Endothelial cell of umbilical vein (primary cell): ENCODE measurements at regions of chr20 and their contacts with region 1.

Region 1: GRCh38 chr20:36050436-36051317 is 82.3 kb downstream of the CNBD2 start:
- DNase-seq: peak; percentile 74
- H3K4me3 ChIP-seq: peak overlapping the region; percentile 63 to 85 (median 66)
- H3K27ac ChIP-seq: peak overlapping the region; percentile 87
- H3K4me1 ChIP-seq: peaks cover 8% of the 10 kb centered on the region
- H3K27me3 ChIP-seq: no peaks in the 10 kb centered on the region
- CTCF ChIP-seq: no peak
- POLR2A ChIP-seq: peak; percentile 98

Region 2: DNA sequence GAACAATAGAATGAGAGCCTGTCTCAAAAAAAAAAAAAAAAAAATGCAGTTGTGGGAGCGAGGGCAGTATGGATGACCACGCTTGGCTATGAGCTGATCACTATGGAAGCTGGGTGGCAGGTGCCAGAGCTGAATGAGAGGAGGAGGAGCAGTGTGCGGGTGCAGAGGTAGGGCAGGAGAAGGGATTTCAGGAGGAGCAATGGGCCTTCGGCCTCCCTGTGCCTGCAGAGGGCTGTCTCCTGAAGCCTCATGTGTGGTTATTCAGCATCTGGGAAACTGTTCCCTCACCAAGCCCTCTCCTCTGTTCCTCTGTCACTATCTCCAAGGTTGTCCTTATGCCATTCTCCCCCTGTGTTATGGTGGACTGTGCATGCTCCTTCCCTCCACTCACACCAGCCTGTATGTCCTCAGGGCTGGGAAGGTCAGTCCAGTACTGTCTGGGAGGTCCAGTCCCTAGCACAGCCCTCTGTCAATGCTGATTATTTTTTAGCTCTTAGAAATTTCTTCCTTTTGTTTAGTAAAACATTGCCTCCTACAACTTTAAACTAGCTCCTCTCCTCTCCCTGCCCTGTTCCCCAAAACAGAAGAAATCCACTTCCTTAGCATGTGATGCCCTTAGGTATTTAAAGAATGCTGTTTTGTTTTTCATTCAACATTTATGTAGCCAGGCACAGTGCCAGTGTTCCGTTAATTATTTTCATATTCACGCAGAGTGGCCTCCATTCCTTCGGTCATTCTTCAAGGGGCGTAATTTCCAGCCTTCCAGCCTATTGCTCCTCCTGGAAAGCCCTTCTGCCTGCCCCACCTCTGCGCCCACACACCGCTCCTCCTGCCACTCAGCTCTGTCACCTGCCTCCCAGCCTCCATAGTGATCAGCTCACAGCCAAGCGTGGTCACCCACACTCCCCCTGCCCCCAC is 33.4 kb before region 1 on chr20:
- CTCF ChIA-PET with region 1: no interaction called
- POLR2A ChIA-PET with region 1: no interaction called
- dilution Hi-C with region 1: no loop called
- intact Hi-C with region 1: loop called (anchors 2 kb)
- DNase-seq: peak; percentile 94
- H3K4me3 ChIP-seq: no peak overlapping the region
- H3K27ac ChIP-seq: peak overlapping the region; percentile 44
- H3K4me1 ChIP-seq: peaks cover 14% of the 10 kb centered on the region
- H3K27me3 ChIP-seq: no peaks in the 10 kb centered on the region
- CTCF ChIP-seq: no peak
- POLR2A ChIP-seq: no peak

Region 3: DNA sequence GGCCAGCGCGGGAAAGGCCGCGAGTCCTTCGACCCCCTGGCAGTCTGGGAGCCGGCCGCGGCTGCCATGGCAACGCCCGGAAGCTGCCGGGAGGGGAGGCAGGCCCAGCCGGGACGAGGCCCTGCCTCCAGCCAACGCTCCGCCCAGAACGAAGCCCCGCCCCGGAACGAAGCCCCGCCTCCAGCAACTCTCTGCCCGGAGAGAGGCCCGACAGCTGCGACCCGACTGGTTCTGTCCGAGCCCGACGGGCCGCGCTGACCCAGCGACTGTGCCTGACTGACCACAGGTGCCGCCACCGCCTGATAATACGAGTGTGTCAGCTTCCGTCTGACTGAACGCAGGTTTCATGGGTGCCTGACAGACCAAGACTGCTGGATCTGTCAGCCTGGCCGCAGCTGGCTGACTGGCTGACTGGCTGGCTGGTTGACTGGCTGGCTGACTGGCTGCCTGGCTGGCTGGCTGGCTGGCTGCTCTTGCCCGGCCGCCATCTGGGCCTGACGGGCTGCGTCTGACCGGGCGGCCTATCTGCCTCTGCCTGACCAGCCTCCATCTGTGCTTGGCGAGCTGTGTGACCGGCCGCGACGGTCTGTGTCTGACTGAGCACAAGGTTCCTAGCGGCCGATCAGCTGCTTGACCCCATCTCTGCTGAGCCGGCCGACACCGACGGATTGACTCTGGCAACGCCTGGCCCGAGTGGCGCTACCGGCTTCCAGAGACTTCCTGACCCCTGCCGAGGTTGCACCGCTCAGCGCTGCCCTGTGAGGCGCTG is 14.2 kb after region 1 on chr20:
- CTCF ChIA-PET with region 1: interaction called, 3 read pairs
- POLR2A ChIA-PET with region 1: interaction called, 3 read pairs
- dilution Hi-C with region 1: no loop called
- intact Hi-C with region 1: loop called (anchors 1 kb)
- DNase-seq: peak; percentile 93
- H3K4me3 ChIP-seq: peak overlapping the region in 1 of 3 experiments; percentile 44
- H3K27ac ChIP-seq: peak overlapping the region; percentile 16
- H3K4me1 ChIP-seq: no peaks in the 10 kb centered on the region
- H3K27me3 ChIP-seq: peaks cover 0 to 2% of the 10 kb centered on the region in 2 experiments
- CTCF ChIP-seq: peak in 1 of 2 donors; percentile 3
- POLR2A ChIP-seq: peak; percentile 74

Region 4: DNA sequence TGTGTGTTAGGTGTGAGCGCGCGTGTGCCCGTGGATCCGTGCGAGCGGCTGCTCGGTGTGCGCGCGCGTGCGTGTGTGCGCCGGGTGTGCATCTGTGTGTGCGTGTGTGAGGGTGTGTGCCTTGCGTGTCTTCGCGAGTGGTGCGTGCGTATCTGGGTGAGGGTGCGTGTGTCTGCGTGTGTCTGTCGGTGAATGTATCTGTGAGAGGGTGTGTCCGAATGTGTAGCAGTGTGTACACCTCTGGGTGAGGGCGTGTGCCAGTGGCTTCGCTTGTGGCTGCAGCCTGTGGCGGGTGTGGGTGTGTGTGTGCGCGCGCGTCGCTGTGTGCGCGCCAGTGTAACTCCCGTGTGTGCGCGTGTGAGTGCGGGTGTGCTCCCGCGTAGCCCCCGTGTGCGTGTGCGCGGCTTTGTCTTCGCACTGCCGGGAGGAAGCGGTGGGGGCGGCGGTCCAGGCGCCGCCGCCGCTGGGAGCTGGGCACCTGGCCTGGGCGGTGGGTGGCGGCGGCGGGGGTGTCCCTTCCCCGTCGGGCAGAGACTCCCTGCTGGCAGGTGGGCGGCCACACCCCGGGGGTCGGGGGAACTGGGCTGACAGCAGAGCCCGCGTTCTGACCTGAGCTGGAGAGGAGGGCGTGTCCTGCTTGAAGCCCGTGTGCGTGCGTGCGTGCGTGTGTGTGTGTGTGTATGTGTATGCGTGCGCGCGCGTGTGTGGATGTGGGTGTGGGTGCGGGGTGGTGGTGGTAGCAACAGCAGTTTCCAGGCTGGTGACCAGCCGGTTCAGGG is 42.5 kb after region 1 on chr20:
- CTCF ChIA-PET with region 1: no interaction called
- POLR2A ChIA-PET with region 1: no interaction called
- dilution Hi-C with region 1: no loop called
- intact Hi-C with region 1: loop called (anchors 5 kb)
- DNase-seq: peak; percentile 24
- H3K4me3 ChIP-seq: peak overlapping the region in 2 of 3 experiments; percentile 1 to 47
- H3K27ac ChIP-seq: no peak overlapping the region
- H3K4me1 ChIP-seq: peaks cover 25% of the 10 kb centered on the region
- H3K27me3 ChIP-seq: peaks cover 6 to 12% of the 10 kb centered on the region in 2 experiments
- CTCF ChIP-seq: no peak
- POLR2A ChIP-seq: peak; percentile 42

Region 5: DNA sequence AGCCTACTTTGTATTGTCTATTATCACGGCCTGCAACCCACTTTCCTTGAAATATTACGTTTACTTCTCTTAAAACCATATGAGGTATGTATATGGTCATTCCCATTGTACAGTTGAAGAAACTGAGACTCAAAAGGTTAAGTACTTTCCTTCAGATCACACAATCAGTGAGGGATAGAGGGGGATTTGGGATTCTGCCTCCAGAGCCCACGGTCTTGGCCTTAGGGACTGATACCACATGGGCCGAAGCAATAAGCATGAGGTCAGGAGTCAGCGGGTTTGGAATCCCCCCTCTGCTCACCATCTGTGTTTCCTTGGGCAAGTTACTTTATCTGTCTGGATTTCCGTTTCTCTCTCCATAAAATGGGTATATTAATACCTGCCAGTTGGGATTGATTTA is 84.5 kb after region 1 on chr20:
- CTCF ChIA-PET with region 1: interaction called, 13 read pairs
- POLR2A ChIA-PET with region 1: no interaction called
- dilution Hi-C with region 1: no loop called
- intact Hi-C with region 1: loop called (anchors 5 kb)
- DNase-seq: no peak
- H3K4me3 ChIP-seq: no peak overlapping the region
- H3K27ac ChIP-seq: no peak overlapping the region
- H3K4me1 ChIP-seq: no peaks in the 10 kb centered on the region
- H3K27me3 ChIP-seq: no peaks in the 10 kb centered on the region
- CTCF ChIP-seq: no peak
- POLR2A ChIP-seq: no peak

Region 6: DNA sequence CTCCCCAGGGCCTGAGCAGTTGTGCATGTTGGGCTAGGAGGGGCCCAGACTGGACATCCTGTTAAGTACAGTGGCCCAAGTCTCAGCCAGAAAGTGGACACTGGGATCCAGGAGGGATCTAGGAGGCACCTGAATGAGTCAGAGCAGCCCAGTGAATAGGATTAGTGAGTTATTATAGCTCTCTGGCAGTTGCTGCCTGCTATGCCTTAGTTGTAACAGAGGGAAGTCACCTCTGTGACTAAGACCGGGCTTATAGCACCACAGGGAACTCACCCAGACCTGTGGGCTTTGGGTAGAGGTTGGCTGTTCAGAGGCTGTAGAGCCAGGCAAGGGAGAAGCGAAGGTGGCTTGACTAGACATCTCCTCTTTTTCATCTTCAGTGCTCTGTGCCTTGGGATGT is 146.6 kb after region 1 on chr20:
- CTCF ChIA-PET with region 1: no interaction called
- POLR2A ChIA-PET with region 1: no interaction called
- dilution Hi-C with region 1: no loop called
- intact Hi-C with region 1: no loop called
- DNase-seq: no peak
- H3K4me3 ChIP-seq: no peak overlapping the region
- H3K27ac ChIP-seq: no peak overlapping the region
- H3K4me1 ChIP-seq: no peaks in the 10 kb centered on the region
- H3K27me3 ChIP-seq: no peaks in the 10 kb centered on the region
- CTCF ChIP-seq: no peak
- POLR2A ChIP-seq: no peak